Naive thymus-derived CD4-positive, alpha-beta T cell (primary cell): ENCODE measurements at regions of chr19 and their contacts with region 1.

Region 1: DNA sequence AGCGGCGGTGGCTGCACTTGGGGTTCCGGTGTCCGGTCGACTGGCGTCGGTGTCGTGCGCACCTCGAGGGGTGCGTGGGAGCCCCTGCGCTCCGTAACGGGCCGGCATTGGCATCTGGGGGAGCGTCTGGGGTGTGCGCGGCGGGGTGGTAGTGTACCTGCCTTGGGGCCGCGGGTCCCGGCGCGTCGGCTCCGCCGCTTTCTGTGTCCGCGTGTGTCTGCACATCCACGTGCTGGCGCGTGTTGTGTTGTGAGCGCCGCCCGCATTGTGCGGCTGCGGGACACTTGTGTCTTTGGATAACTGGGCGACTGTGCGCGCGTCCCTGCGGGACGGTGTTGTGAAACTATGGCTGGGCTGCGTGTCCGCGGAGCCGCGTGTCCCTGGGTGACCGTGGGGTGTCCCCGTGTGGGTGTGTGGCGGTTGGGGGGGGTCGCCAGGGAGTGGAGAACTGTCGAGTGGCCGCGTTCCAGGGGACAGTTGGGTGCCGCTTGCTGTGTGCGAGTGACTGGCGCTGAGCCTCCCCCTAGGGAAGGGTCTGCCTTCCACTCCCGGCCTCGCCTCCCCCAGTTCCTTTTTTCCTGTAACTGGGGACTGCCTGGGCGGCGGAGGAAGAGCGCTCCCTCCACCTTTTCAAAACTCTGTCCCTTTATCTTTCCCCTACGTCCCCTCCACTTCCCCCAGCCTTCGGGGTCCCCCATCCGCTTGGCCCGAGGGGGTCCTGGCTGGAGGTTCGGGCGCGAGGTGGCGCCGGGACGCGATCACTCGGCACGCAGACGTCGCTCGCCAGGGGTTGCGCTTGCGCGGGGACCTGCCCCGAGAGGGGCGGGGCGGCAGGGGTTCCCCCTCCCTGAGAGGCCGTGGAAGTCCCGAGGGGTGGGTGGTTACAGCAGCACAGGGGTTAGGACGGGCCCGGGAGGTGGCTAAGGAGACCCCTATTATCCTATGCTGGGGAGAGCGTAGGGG is 5.7 kb upstream of the NFIC start:
- DNase-seq: peak; percentile 60 to 80 (median 71)
- ATAC-seq: peak; percentile 70
- H3K4me3 ChIP-seq: peak overlapping the region; percentile 62
- H3K4me3 Mint-ChIP-seq: peak overlapping the region; percentile 85 to 97 (median 90)
- H3K27ac ChIP-seq: peak overlapping the region; percentile 69
- H3K27ac Mint-ChIP-seq: peak overlapping the region; percentile 54 to 91 (median 84)
- H3K4me1 ChIP-seq: peaks cover 16 to 18% of the 10 kb centered on the region in 2 donors
- H3K4me1 Mint-ChIP-seq: peaks cover 25 to 49% (median 41%) of the 10 kb centered on the region in 7 donors
- H3K27me3 ChIP-seq: no peaks in the 10 kb centered on the region
- H3K27me3 Mint-ChIP-seq: peaks cover 0 to 67% (median 0%) of the 10 kb centered on the region in 5 donors

Region 2: GRCh38 chr19:3338541-3339181 is 22.0 kb before region 1 on chr19:
- CTCF ChIA-PET with region 1: no interaction called
- POLR2A ChIA-PET with region 1: interaction called, 9 read pairs
- intact Hi-C with region 1: loop called in 1 of 2 experiments (anchors 1 kb)
- DNase-seq: peak in 8 of 9 donors; percentile 22 to 79 (median 74)
- ATAC-seq: peak; percentile 95
- H3K4me3 ChIP-seq: peak overlapping the region; percentile 52
- H3K4me3 Mint-ChIP-seq: peak overlapping the region in 9 of 10 donors; percentile 66 to 81 (median 74)
- H3K27ac ChIP-seq: peak overlapping the region; percentile 67
- H3K27ac Mint-ChIP-seq: peak overlapping the region in 8 of 9 donors; percentile 81 to 93 (median 90)
- H3K4me1 ChIP-seq: peaks cover 8 to 13% of the 10 kb centered on the region in 2 donors
- H3K4me1 Mint-ChIP-seq: peaks cover 4 to 26% (median 10%) of the 10 kb centered on the region in 7 donors
- H3K27me3 ChIP-seq: no peaks in the 10 kb centered on the region
- H3K27me3 Mint-ChIP-seq: no peaks in the 10 kb centered on the region

Region 3: GRCh38 chr19:3370728-3371591 is 10.3 kb after region 1 on chr19:
- CTCF ChIA-PET with region 1: no interaction called
- POLR2A ChIA-PET with region 1: no interaction called
- intact Hi-C with region 1: no loop called
- DNase-seq: no peak
- ATAC-seq: no peak
- H3K4me3 ChIP-seq: no peak overlapping the region
- H3K4me3 Mint-ChIP-seq: peak overlapping the region in 1 of 10 donors; percentile 16
- H3K27ac ChIP-seq: no peak overlapping the region
- H3K27ac Mint-ChIP-seq: peak overlapping the region in 5 of 9 donors; percentile 38 to 79 (median 70)
- H3K4me1 ChIP-seq: peaks cover 0 to 3% of the 10 kb centered on the region in 2 donors
- H3K4me1 Mint-ChIP-seq: peaks cover 3 to 41% (median 32%) of the 10 kb centered on the region in 7 donors
- H3K27me3 ChIP-seq: no peaks in the 10 kb centered on the region
- H3K27me3 Mint-ChIP-seq: peaks cover 0 to 20% (median 0%) of the 10 kb centered on the region in 5 donors

Region 4: DNA sequence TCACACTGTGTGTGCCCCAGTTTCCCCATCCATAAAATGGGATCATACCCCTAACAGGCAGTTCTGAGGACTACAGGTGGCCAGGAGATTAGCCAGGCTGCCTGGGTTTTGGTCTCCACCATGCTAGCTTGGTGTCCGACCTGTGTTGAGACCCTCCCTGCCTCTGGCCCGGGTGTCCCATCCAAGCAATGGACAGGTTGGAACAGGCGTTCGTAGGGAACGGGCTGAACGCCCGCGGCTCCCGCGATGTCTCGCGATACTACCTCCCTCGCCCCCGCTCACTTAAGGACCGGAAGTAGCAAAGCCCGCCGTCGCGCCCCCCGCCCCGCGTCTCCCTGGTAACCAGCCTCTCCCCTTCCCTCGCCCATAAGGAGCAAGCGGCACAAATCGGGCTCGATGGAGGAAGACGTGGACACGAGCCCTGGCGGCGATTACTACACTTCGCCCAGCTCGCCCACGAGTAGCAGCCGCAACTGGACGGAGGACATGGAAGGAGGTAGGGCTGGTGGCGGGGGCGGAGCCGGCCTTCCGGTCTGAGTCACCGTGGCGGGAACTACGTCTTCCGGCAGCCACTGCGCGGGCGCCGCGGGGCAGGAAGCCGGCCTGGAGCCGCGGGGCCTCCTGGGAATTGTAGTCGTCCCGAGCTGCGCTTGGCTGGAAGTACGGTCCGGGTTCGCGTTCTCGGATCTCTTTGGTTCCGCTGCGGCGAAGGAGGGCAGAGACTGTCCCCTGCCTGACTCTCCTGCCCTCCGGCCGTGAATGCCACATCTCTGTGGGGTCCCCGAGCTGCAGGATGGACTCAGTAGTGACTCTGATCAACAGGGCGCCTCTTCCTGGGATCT is 74.2 kb after region 1 on chr19:
- CTCF ChIA-PET with region 1: no interaction called
- POLR2A ChIA-PET with region 1: interaction called, 3 read pairs
- intact Hi-C with region 1: loop called (anchors 1 to 2 kb)
- DNase-seq: peak; percentile 91 to 97 (median 96)
- ATAC-seq: peak; percentile 99
- H3K4me3 ChIP-seq: peak overlapping the region; percentile 70
- H3K4me3 Mint-ChIP-seq: peak overlapping the region; percentile 87 to 100 (median 96)
- H3K27ac ChIP-seq: peak overlapping the region; percentile 86
- H3K27ac Mint-ChIP-seq: peak overlapping the region; percentile 95 to 99 (median 98)
- H3K4me1 ChIP-seq: peaks cover 9 to 11% of the 10 kb centered on the region in 2 donors
- H3K4me1 Mint-ChIP-seq: peaks cover 7 to 18% (median 14%) of the 10 kb centered on the region in 7 donors
- H3K27me3 ChIP-seq: no peaks in the 10 kb centered on the region
- H3K27me3 Mint-ChIP-seq: no peaks in the 10 kb centered on the region